ENCODE measurements at regions of chr5 and their contacts with region 1.

Region 1: GRCh38 chr5:111550279-111551020 is 38.1 kb upstream of the STARD4 start:
- H3K4me3 ChIP-seq: no peak overlapping the region
- H3K27ac ChIP-seq: no peak overlapping the region
- H3K4me1 ChIP-seq: peaks cover 10% of the 10 kb centered on the region
- CTCF ChIP-seq: peak; percentile 25; the same call in 1 of the 2 replicates

Region 2: GRCh38 chr5:111530298-111530740 is 20.1 kb before region 1 on chr5:
- CTCF ChIA-PET with region 1: interaction called, 17 read pairs
- POLR2A ChIA-PET with region 1: no interaction called
- H3K4me3 ChIP-seq: no peak overlapping the region
- H3K27ac ChIP-seq: no peak overlapping the region
- H3K4me1 ChIP-seq: no peaks in the 10 kb centered on the region
- CTCF ChIP-seq: no peak

Region 3: GRCh38 chr5:111563031-111563822 is 12.8 kb after region 1 on chr5:
- CTCF ChIA-PET with region 1: interaction called, 17 read pairs
- POLR2A ChIA-PET with region 1: no interaction called
- H3K4me3 ChIP-seq: no peak overlapping the region
- H3K27ac ChIP-seq: no peak overlapping the region
- H3K4me1 ChIP-seq: 0 out of 2 replicates have a peak, but pooled peaks cover 2% of the 10 kb centered on the region
- CTCF ChIP-seq: no peak

Region 4: DNA sequence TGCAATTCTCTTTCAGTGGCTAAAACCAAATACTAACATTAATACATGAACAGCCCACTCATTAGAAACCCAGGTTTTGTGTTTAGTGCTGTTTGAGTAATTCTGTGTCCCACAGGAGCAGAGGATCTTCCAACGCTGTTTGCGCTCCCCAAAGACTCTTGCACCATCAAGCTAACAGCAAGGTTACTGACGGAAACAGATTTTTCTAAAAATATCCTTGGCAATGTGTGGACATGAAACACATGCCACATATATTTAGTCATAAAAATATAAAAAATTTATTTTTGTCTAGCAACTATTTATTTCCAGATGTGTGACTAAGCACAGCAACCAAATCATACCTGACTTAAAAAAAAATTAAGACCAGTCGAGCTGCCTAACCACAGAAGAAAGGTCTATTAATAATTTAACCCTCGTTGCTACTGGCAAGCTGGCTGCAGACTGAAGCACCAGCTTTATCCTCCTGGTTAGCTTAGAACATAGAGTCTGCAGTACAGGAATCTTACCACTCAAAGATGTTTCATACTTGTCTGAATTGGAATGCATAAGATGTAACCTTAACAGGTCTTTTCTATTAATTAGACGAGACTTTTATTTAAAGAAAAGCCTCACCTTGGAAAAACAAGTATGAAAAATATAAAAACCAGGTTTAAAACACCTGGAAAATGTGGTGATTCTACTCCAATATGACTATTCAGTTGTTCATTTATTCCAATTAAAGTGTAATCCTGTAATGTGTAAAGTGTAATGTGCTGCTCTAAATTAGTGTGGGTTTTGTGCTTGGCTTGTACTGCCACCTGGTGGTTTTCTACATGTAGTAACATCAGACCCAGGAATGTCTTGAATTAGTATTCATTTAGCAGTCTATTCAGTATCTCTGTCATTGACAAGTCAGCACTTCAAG is 596.1 kb after region 1 on chr5:
- CTCF ChIA-PET with region 1: interaction called, 25 read pairs
- POLR2A ChIA-PET with region 1: no interaction called
- H3K4me3 ChIP-seq: no peak overlapping the region
- H3K27ac ChIP-seq: no peak overlapping the region
- H3K4me1 ChIP-seq: no peaks in the 10 kb centered on the region
- CTCF ChIP-seq: peak; percentile 37